CD8-positive, alpha-beta memory T cell (primary cell): ENCODE measurements at regions of chr16 and their contacts with region 1.

Region 1: DNA sequence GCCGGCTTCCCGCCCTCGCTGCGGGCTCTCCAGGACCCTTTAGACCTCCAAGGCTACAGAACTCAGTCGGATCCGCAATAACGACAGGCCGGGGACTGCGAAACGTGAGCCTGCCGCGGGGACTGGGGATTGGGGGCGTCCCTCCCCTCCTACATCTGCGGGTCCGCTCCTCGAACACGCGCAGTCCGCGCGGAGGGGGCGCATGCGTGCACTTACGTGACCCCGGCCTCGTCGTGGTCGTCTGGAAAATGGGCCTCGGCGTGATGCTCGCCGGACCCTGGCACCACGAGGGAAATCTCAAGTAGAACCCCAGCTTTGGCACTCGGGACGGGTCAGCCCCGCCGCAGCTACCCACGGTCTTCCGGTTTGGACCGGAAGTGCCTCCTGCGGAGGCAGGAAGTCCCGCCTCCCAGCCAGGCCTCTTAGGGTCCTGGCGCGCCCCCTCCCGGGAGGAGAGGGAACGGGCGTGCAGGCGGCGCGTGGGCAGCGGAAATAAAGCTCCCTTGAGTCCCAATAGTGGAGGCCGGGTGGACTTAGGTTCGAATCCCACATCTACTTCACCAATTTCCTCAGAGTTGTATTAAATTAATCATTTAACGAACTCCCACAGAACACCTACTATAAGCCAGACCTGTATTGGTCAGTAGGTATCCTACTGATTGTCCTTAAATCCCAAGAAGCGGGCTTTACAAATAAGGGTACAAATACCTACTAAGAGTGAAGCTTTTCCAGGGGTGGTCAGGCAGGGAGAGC is at the start of gene TAF1C:
- DNase-seq: peak; percentile 83 to 92 (median 86)
- H3K4me3 ChIP-seq: peak within 1 kb of the TSS; percentile 99
- H3K4me3 Mint-ChIP-seq: peak within 1 kb of the TSS; percentile 90 to 99 (median 96)
- H3K27ac ChIP-seq: peak within 1 kb of the TSS; percentile 90
- H3K27ac Mint-ChIP-seq: peak within 1 kb of the TSS; percentile 86 to 97 (median 94)
- H3K4me1 ChIP-seq: peaks cover 14% of the 10 kb centered on the region
- H3K4me1 Mint-ChIP-seq: peaks cover 21 to 29% (median 23%) of the 10 kb centered on the region in 3 donors
- H3K27me3 ChIP-seq: no peaks in the 10 kb centered on the region
- H3K27me3 Mint-ChIP-seq: no peaks in the 10 kb centered on the region
- total RNA-seq, gene TAF1C: 49.9 to 51.2 TPM

Region 2: GRCh38 chr16:84084570-84085270 is 102.1 kb before region 1 on chr16:
- CTCF ChIA-PET with region 1: interaction called, 54 read pairs
- POLR2A ChIA-PET with region 1: no interaction called
- DNase-seq: peak; percentile 47 to 81 (median 59)
- H3K4me3 ChIP-seq: no peak overlapping the region
- H3K4me3 Mint-ChIP-seq: no peak overlapping the region
- H3K27ac ChIP-seq: no peak overlapping the region
- H3K27ac Mint-ChIP-seq: peak overlapping the region in 4 of 8 donors; percentile 21 to 63 (median 36)
- H3K4me1 ChIP-seq: peaks cover 22% of the 10 kb centered on the region
- H3K4me1 Mint-ChIP-seq: peaks cover 25 to 49% (median 43%) of the 10 kb centered on the region in 3 donors
- H3K27me3 ChIP-seq: no peaks in the 10 kb centered on the region
- H3K27me3 Mint-ChIP-seq: no peaks in the 10 kb centered on the region

Region 3: DNA sequence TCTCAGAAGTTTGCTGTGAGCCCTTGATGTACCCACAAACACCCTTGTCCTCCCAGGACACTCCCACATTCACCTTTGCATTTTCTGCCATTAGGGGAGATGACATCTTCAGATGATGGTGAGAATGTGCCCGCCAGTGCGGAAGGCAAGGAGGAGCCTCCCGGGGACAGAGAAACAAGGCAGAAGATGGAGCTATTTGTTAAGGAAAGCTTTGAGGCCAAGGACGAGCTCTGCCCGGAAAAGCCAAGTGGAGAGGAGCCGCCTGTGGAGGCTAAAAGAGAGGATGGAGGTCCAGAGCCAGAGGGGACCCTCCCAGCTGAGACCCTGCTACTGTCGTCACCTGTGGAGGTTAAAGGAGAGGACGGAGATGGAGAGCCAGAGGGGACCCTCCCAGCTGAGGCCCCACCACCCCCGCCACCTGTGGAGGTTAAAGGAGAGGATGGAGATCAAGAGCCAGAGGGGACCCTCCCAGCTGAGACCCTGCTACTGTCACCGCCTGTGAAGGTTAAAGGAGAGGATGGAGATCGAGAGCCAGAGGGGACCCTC is 17.0 kb before region 1 on chr16:
- CTCF ChIA-PET with region 1: interaction called, 12 read pairs
- POLR2A ChIA-PET with region 1: no interaction called
- DNase-seq: no peak
- H3K4me3 ChIP-seq: no peak overlapping the region
- H3K4me3 Mint-ChIP-seq: no peak overlapping the region
- H3K27ac ChIP-seq: no peak overlapping the region
- H3K27ac Mint-ChIP-seq: no peak overlapping the region
- H3K4me1 ChIP-seq: no peaks in the 10 kb centered on the region
- H3K4me1 Mint-ChIP-seq: no peaks in the 10 kb centered on the region
- H3K27me3 ChIP-seq: no peaks in the 10 kb centered on the region
- H3K27me3 Mint-ChIP-seq: peaks cover 17 to 38% of the 10 kb centered on the region in 2 donors

Region 4: DNA sequence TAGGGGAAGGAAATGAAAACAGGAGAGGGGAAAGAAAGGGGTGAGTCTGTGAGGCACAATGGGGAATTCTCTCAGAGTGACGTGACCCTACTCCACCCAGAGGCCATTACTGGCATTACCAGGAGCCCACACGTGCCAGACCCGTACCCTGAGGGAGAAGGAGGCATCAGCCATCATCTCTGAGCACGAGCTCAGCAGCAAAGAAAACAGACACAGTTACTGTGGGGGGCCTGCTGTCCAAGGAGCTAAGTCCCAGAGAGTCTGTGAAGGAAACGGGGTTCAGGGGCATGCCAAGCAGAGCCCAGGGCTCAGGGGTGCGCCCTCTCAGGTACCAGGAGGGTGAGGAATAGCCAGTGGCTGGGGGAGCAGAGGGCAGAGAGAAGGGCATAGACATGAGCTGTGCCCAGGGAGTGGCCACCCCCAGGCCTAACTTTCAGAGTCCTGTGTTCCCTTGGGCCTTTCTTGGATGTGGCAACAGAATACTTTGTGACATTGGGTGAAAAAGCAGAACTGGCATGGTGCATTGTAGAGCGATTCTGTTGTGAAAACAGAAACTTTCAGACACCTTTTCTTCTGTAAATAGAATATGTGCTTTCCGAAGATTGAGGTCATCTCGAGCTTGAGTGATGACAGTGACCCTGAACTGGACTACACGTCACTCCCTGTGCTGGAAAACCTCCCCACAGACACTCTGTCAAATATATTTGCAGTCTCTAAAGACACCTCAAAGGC is 11.3 kb before region 1 on chr16:
- CTCF ChIA-PET with region 1: interaction called, 12 read pairs
- POLR2A ChIA-PET with region 1: no interaction called
- DNase-seq: peak in 4 of 5 donors; percentile 20 to 37 (median 28)
- H3K4me3 ChIP-seq: no peak overlapping the region
- H3K4me3 Mint-ChIP-seq: no peak overlapping the region
- H3K27ac ChIP-seq: no peak overlapping the region
- H3K27ac Mint-ChIP-seq: peak overlapping the region in 2 of 8 donors; percentile 31 to 78
- H3K4me1 ChIP-seq: no peaks in the 10 kb centered on the region
- H3K4me1 Mint-ChIP-seq: peaks cover 0 to 6% (median 5%) of the 10 kb centered on the region in 3 donors
- H3K27me3 ChIP-seq: no peaks in the 10 kb centered on the region
- H3K27me3 Mint-ChIP-seq: peaks cover 3 to 7% of the 10 kb centered on the region in 2 donors